Common myeloid progenitor, CD34-positive (primary cell): ENCODE measurements at regions of chr1 and their contacts with region 1.

Region 1: DNA sequence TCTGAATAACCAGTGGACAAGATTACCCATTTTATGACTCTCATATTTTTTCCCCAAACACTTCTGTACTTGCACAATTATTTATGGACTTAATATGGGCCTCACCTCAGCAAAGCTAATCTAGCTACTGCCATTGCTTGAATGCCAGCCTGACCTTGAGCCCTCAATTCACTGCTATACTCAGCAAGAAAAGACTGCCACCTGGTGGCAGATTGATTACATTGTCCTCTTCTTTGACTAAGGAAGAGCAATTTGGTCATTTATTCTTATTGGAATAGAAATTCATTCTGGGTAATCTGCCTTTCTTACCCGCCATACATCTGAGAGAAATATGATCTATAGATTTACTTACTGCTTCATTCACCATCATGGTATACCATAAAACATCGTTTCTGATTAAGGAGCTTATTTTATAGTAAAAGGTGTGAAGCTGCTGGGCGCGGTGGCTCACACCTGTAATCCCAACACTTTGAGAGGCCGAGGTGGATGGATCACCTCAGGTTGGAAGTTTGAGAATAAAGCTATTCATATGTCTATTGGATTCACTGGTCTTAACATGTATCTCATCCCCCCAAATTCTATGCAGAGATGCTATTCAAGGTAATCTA is 32.9 kb upstream of the DIPK1A start:
- DNase-seq: peak; percentile 83 to 89 (median 89)
- H3K4me3 ChIP-seq: no peak overlapping the region
- H3K27ac ChIP-seq: no peak overlapping the region
- H3K4me1 ChIP-seq: peaks cover 4 to 13% (median 10%) of the 10 kb centered on the region in 4 experiments
- H3K27me3 ChIP-seq: no peaks in the 10 kb centered on the region

Region 2: GRCh38 chr1:92851729-92852128 is 142.5 kb before region 1 on chr1:
- CTCF ChIA-PET with region 1: interaction called, 76 read pairs
- POLR2A ChIA-PET with region 1: no interaction called
- DNase-seq: peak in 2 of 3 donors; percentile 20 to 32
- H3K4me3 ChIP-seq: no peak overlapping the region
- H3K27ac ChIP-seq: no peak overlapping the region
- H3K4me1 ChIP-seq: peaks cover 2 to 5% (median 4%) of the 10 kb centered on the region in 4 experiments
- H3K27me3 ChIP-seq: no peaks in the 10 kb centered on the region

Region 3: GRCh38 chr1:92858564-92859399 is 135.4 kb before region 1 on chr1:
- CTCF ChIA-PET with region 1: interaction called, 76 read pairs
- POLR2A ChIA-PET with region 1: no interaction called
- DNase-seq: peak; percentile 80 to 90 (median 88)
- H3K4me3 ChIP-seq: peak overlapping the region in 4 of 7 experiments; percentile 4 to 72 (median 17)
- H3K27ac ChIP-seq: no peak overlapping the region
- H3K4me1 ChIP-seq: peaks cover 0 to 4% (median 0%) of the 10 kb centered on the region in 4 experiments
- H3K27me3 ChIP-seq: peaks cover 0 to 4% (median 0%) of the 10 kb centered on the region in 5 experiments

Region 4: GRCh38 chr1:92960395-92961130 is 33.6 kb before region 1 on chr1:
- CTCF ChIA-PET with region 1: interaction called, 61 read pairs
- POLR2A ChIA-PET with region 1: no interaction called
- DNase-seq: peak; percentile 82 to 86 (median 83)
- H3K4me3 ChIP-seq: peak overlapping the region; percentile 53 to 92 (median 70)
- H3K27ac ChIP-seq: peak overlapping the region in 1 of 2 experiments; percentile 86
- H3K4me1 ChIP-seq: peaks cover 0 to 19% (median 14%) of the 10 kb centered on the region in 4 experiments
- H3K27me3 ChIP-seq: peaks cover 0 to 14% (median 0%) of the 10 kb centered on the region in 5 experiments

Region 5: GRCh38 chr1:92968138-92969032 is 25.8 kb before region 1 on chr1:
- CTCF ChIA-PET with region 1: interaction called, 61 read pairs
- POLR2A ChIA-PET with region 1: no interaction called
- DNase-seq: peak in 2 of 3 donors; percentile 29 to 38
- H3K4me3 ChIP-seq: no peak overlapping the region
- H3K27ac ChIP-seq: no peak overlapping the region
- H3K4me1 ChIP-seq: peaks cover 5 to 13% (median 11%) of the 10 kb centered on the region in 4 experiments
- H3K27me3 ChIP-seq: peaks cover 0 to 15% (median 0%) of the 10 kb centered on the region in 5 experiments

Region 6: GRCh38 chr1:92975551-92976232 is 18.5 kb before region 1 on chr1:
- CTCF ChIA-PET with region 1: interaction called, 22 read pairs
- POLR2A ChIA-PET with region 1: no interaction called
- DNase-seq: no peak
- H3K4me3 ChIP-seq: no peak overlapping the region
- H3K27ac ChIP-seq: no peak overlapping the region
- H3K4me1 ChIP-seq: peaks cover 0 to 11% (median 2%) of the 10 kb centered on the region in 4 experiments
- H3K27me3 ChIP-seq: no peaks in the 10 kb centered on the region

Region 7: DNA sequence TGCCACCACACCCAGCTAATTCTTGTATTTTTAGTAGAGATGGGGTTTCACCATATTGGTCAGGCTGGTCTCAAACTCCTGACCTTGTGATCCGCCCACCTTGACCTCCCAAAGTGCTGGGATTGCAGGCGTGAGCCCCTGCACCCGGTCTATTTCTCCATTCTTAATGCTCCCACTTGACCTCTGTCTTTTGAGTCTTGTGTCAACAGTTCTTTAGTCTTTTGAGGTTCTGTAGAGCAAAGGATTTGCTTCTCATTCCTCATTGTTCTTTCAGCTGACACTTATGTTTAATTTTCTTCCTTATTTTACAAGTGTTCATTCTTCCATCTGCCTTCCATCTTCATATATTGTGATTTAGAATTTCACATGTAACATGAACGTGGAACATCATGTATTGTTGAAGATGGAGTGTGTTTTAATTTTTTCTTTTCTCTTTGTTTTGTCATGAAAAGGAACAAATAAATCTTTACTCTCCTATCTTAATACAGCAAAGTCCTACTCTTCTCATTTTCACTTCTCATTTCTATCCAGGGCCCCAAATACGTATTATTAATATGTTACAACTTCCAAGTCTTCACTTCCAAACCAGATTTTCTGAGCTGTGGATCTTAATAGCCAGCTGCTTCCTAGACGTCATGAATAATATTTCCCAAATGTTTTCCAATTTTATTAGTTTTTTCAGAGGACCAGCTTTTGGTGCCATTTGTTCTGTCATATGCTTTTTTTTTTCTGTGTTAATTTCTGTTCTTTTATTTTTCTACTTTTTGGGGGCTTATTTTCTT is 101.8 kb after region 1 on chr1:
- CTCF ChIA-PET with region 1: no interaction called
- POLR2A ChIA-PET with region 1: no interaction called
- DNase-seq: no peak
- H3K4me3 ChIP-seq: no peak overlapping the region
- H3K27ac ChIP-seq: no peak overlapping the region
- H3K4me1 ChIP-seq: peaks cover 0 to 10% (median 6%) of the 10 kb centered on the region in 4 experiments
- H3K27me3 ChIP-seq: no peaks in the 10 kb centered on the region